HEK293T (cell line): ENCODE measurements at regions of chr12 and their contacts with region 1.

Region 1: GRCh38 chr12:57175428-57176138 is 28.2 kb upstream of the LRP1-AS start:
- DNase-seq: peak; percentile 89

Region 2: DNA sequence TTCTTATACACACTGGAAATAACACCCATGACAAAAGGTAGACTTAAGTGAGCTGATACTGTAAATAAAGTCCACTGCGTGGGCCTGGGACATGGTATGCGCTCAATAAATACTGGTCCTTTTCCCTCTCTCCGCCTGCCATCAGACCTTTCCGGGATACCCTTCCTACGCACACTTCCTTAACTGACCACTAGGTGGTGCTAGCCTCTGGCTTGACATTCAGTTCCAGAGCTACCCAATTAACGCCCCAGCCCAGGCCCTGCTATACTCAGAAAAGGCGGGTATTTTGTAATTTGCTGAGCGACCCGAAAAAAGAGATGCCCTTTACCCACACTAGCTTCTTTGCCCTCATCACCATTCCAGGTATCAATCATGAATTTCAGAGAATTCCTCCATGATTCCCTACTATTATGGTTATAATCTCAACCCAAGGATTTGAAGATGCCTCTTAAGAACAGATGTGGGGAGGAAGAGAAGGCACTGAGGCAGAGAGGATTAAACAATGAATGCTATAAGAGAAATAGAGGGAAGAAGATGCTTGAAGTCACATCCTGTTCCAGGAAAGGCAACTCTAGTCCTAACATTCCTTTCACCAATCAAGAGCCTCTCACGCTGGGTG is 51.2 kb before region 1 on chr12:
- CTCF ChIA-PET with region 1: interaction called, 16 read pairs
- POLR2A ChIA-PET with region 1: interaction called, 17 read pairs
- DNase-seq: peak; percentile 78

Region 3: DNA sequence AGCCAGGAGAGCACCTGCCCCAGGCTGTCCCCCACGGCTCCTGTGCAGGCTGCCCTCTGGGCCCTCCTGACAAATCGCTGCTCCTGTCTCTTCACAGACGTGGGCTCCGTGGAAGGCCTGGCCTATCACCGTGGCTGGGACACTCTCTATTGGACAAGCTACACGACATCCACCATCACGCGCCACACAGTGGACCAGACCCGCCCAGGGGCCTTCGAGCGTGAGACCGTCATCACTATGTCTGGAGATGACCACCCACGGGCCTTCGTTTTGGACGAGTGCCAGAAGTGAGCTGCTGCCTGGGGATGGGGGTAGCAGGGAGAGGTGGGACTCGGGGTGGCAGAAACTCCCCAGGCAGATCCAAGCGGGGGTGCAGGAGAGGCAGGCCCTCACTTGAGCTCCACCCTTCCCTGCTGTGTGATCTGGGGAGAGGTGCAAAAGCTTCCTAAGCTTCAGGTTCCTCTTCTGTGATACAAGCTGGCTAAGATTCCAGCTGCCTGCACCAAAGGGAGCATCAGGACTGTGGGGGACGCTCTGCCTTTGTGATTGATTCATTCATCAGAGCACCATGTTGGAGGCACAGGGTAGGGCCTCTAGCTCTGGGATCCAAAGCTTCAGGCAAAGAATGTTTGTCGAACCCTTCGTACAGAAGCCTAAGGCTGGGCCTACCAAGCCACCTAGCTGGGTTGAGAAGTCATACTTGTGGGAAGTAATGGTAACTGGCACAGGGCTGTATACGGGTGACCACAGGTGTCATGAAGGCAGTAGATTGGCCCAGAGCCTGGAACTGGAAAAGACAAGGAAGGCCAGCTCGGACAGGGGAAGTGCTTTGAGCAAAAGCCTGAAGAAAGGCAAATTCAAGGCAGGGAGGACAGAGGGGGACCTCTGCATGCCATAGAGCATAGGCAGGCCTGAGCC is 11.8 kb after region 1 on chr12:
- CTCF ChIA-PET with region 1: interaction called, 21 read pairs
- POLR2A ChIA-PET with region 1: no interaction called
- DNase-seq: no peak